GM12878 (cell line): ENCODE measurements at regions of chr11 and their contacts with region 1.

Region 1: GRCh38 chr11:129117595-129118350 is 74.4 kb downstream of the ARHGAP32 start:
- DNase-seq: no peak
- ATAC-seq: peak; percentile 71
- H3K4me3 ChIP-seq: no peak overlapping the region
- H3K27ac ChIP-seq: no peak overlapping the region
- H3K4me1 ChIP-seq: no peaks in the 10 kb centered on the region
- H3K27me3 ChIP-seq: no peaks in the 10 kb centered on the region
- CTCF ChIP-seq: peak; percentile 74 to 97 (median 81); a peak in 5 of 6 replicates
- EP300 ChIP-seq: no peak
- POLR2A ChIP-seq: no peak
- RAD21 ChIP-seq: peak; percentile 92

Region 2: DNA sequence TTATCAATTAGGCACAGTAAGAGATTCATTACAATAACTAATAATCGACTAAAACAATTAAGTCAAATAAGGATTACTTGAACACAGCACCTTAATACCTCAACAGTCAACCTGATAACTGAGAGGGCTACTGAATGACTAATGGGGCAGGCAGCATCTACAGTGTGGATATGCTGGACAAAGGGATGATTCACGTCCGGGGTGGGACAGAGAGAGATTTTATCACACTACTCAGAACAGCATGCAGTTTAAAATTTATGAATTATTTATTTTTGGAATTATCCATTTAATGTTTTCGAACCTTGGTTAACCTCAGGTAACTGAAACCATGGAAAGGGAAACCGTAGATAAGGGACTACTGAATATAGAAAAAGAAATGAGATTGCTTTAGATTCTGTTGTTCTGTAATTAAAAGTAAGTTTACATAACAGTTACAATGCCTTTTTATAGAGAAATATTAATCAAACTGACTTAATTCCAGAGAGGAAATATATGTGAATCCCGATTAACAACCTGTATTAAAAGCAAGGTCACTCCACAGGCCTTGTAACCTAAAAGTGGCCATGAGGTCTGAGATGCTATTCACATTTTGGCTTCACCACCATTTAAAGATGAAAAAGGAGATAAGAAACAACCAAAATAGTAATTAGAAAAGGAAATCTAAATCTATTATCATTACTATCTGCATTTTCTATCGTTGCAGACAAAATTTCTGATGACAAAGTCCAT is 56.1 kb before region 1 on chr11:
- CTCF ChIA-PET with region 1: no interaction called
- POLR2A ChIA-PET with region 1: no interaction called
- RAD21 ChIA-PET with region 1: no interaction called
- SMC1A ChIA-PET with region 1: no interaction called
- in situ Hi-C with region 1: no loop called
- intact Hi-C with region 1: no loop called
- DNase-seq: no peak
- ATAC-seq: no peak
- H3K4me3 ChIP-seq: no peak overlapping the region
- H3K27ac ChIP-seq: no peak overlapping the region
- H3K4me1 ChIP-seq: no peaks in the 10 kb centered on the region
- H3K27me3 ChIP-seq: no peaks in the 10 kb centered on the region
- CTCF ChIP-seq: no peak
- EP300 ChIP-seq: no peak
- POLR2A ChIP-seq: no peak
- RAD21 ChIP-seq: no peak

Region 3: GRCh38 chr11:129148496-129148895 is 30.7 kb after region 1 on chr11:
- CTCF ChIA-PET with region 1: no interaction called
- POLR2A ChIA-PET with region 1: no interaction called
- RAD21 ChIA-PET with region 1: no interaction called
- SMC1A ChIA-PET with region 1: no interaction called
- in situ Hi-C with region 1: no loop called
- intact Hi-C with region 1: no loop called
- DNase-seq: no peak
- ATAC-seq: no peak
- H3K4me3 ChIP-seq: no peak overlapping the region
- H3K27ac ChIP-seq: no peak overlapping the region
- H3K4me1 ChIP-seq: no peaks in the 10 kb centered on the region
- H3K27me3 ChIP-seq: no peaks in the 10 kb centered on the region
- CTCF ChIP-seq: no peak
- EP300 ChIP-seq: no peak
- POLR2A ChIP-seq: no peak
- RAD21 ChIP-seq: no peak

Region 4: DNA sequence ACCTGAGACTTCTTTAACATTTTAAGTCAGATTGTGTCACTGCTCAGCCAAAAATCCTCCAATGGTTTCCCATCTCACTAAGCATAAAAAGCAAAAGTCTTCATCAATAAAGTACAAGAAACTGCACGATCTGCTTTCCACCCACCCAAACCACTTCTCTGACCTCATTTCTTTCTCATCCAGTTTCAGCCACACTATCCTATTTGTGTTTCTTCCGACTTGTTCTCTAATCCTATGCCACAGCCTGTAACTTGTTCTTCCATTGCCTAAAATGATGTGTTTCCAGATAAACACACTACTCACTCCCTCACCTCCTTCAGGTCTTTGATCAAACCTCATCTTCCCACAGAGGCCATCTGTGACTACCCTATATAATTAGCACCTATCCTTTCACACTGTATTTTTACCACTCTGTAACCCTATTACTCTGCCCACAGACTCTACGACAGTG is 46.0 kb after region 1 on chr11:
- CTCF ChIA-PET with region 1: no interaction called
- POLR2A ChIA-PET with region 1: no interaction called
- RAD21 ChIA-PET with region 1: no interaction called
- SMC1A ChIA-PET with region 1: no interaction called
- in situ Hi-C with region 1: no loop called
- intact Hi-C with region 1: no loop called
- DNase-seq: no peak
- ATAC-seq: no peak
- H3K4me3 ChIP-seq: no peak overlapping the region
- H3K27ac ChIP-seq: no peak overlapping the region
- H3K4me1 ChIP-seq: no peaks in the 10 kb centered on the region
- H3K27me3 ChIP-seq: no peaks in the 10 kb centered on the region
- CTCF ChIP-seq: no peak
- EP300 ChIP-seq: no peak
- POLR2A ChIP-seq: no peak
- RAD21 ChIP-seq: no peak

Region 5: GRCh38 chr11:129223701-129224149 is 106.0 kb after region 1 on chr11:
- CTCF ChIA-PET with region 1: no interaction called
- POLR2A ChIA-PET with region 1: no interaction called
- RAD21 ChIA-PET with region 1: no interaction called
- SMC1A ChIA-PET with region 1: no interaction called
- in situ Hi-C with region 1: no loop called
- intact Hi-C with region 1: no loop called
- DNase-seq: no peak
- ATAC-seq: no peak
- H3K4me3 ChIP-seq: no peak overlapping the region
- H3K27ac ChIP-seq: no peak overlapping the region
- H3K4me1 ChIP-seq: no peaks in the 10 kb centered on the region
- H3K27me3 ChIP-seq: no peaks in the 10 kb centered on the region
- CTCF ChIP-seq: no peak
- EP300 ChIP-seq: no peak
- POLR2A ChIP-seq: no peak
- RAD21 ChIP-seq: no peak

Region 6: GRCh38 chr11:129237880-129238638 is 120.3 kb after region 1 on chr11:
- CTCF ChIA-PET with region 1: no interaction called
- POLR2A ChIA-PET with region 1: no interaction called
- RAD21 ChIA-PET with region 1: no interaction called
- SMC1A ChIA-PET with region 1: no interaction called
- in situ Hi-C with region 1: no loop called
- intact Hi-C with region 1: loop called (anchors 5 kb)
- DNase-seq: no peak
- ATAC-seq: peak; percentile 87
- H3K4me3 ChIP-seq: no peak overlapping the region
- H3K27ac ChIP-seq: no peak overlapping the region
- H3K4me1 ChIP-seq: no peaks in the 10 kb centered on the region
- H3K27me3 ChIP-seq: no peaks in the 10 kb centered on the region
- CTCF ChIP-seq: no peak
- EP300 ChIP-seq: no peak
- POLR2A ChIP-seq: no peak
- RAD21 ChIP-seq: no peak

Region 7: DNA sequence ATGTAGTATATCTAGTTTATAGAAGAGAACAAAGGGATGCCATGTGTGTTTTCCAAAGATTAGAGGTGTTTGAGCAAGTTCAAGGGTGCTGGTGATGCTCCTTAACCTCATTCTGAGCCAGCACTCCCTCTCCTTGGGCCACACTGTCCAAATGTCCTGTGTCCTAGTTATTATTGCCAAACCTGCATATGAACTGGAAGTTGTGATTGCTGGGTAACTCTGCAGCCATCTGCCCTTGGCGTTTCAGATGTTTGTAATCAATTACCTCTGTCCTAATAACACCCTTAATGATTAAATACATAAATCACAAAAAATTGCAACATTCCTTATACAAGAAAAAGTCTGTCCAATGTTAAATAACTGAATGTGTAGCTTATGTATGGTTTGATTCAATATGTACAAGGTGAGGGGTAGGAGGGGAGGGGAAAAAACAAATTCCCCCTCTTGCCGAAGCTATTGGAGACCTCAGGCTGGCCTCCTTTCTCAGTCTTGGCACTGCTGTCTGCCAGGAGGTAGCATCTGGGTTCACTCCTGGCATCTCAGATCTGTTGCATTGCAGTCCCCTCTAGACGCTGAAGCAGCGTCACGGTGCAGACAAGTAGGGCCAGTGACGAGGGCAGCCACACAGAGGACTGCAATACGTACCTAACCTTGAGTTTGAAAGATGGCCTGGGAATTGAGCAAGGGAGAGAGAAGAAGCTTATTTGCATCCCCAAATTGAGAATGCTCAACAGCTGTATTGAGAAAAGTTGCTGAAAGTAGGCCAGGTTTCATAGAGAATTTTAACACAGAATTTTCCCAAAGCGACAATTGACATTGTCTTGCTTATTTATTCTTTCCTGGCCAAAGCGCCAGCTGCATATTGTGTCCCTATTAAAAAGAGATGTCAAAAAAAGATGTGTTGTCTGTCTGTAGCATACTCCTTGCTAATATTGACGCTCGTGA is 164.0 kb after region 1 on chr11:
- CTCF ChIA-PET with region 1: no interaction called
- POLR2A ChIA-PET with region 1: no interaction called
- RAD21 ChIA-PET with region 1: no interaction called
- SMC1A ChIA-PET with region 1: no interaction called
- in situ Hi-C with region 1: no loop called
- intact Hi-C with region 1: loop called (anchors 1 kb)
- DNase-seq: no peak
- ATAC-seq: no peak
- H3K4me3 ChIP-seq: no peak overlapping the region
- H3K27ac ChIP-seq: no peak overlapping the region
- H3K4me1 ChIP-seq: no peaks in the 10 kb centered on the region
- H3K27me3 ChIP-seq: peaks cover 0 to 4% of the 10 kb centered on the region in 2 experiments; a peak in 1 of 4 replicates
- CTCF ChIP-seq: no peak
- EP300 ChIP-seq: no peak
- POLR2A ChIP-seq: no peak
- RAD21 ChIP-seq: no peak

Region 8: DNA sequence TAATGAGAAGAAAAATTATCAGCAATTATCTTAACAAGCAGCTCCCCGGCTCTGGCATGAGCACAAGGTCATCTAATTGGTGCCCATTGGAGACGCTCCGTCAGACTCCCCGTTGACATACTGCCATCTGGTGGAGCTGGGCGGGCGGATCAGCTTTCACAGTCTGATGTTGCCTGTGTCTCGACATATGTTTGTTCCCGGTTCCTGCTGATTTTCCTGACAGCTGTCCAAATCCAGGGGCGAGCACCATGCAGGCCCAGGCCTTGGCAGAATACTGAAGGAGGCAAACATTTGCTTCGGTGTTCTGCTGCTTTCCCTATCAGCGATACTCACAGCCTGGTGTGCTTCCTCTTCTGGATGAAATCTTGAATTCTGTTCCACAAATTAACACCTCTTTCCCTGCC is 214.1 kb after region 1 on chr11:
- CTCF ChIA-PET with region 1: interaction called, 47 read pairs
- POLR2A ChIA-PET with region 1: no interaction called
- RAD21 ChIA-PET with region 1: interaction called, 21 read pairs
- SMC1A ChIA-PET with region 1: interaction called, 18 read pairs
- in situ Hi-C with region 1: loop called (anchors 5 kb)
- intact Hi-C with region 1: loop called (anchors 1 kb)
- DNase-seq: peak; percentile 11
- ATAC-seq: peak; percentile 99
- H3K4me3 ChIP-seq: no peak overlapping the region
- H3K27ac ChIP-seq: no peak overlapping the region
- H3K4me1 ChIP-seq: no peaks in the 10 kb centered on the region
- H3K27me3 ChIP-seq: no peaks in the 10 kb centered on the region
- CTCF ChIP-seq: peak; percentile 77 to 88 (median 86)
- EP300 ChIP-seq: no peak
- POLR2A ChIP-seq: no peak
- RAD21 ChIP-seq: peak; percentile 72

Region 9: DNA sequence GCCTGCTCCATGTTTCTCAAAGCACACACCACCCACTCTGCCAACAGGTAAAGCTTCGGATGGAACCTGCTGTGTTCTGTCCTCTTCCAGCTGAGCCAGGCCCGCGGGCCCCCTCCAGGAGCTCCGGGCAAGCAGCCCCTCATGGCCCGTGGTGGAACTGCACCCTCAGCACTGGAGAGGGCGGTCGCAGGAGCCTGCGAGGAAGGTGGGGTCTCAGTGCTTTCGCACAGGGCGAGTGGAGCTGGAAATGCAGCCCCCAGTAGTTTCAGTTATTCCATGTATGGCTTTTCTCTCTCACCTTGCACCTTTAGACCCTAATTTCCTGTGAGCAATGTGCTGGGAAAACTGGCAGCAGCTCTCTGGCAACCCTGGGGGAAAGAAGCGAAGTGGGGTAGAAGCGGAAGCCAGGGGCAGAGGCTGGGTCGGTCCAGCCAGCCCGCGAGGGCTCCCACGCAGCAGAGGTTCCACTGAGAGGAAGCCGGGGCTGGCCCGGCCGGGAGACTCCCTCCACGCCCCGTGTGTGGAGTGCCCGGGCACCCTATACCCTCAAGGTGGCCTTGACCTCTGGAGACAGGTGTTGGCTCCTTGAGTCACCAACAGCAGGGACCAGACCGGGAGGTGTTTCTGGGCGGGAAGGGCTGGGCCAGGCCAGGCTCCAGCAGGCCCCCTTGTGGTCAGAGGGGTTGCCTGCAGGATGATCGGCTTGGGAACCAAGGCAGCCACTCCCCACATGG is 578.0 kb after region 1 on chr11:
- CTCF ChIA-PET with region 1: interaction called, 3 read pairs
- POLR2A ChIA-PET with region 1: no interaction called
- RAD21 ChIA-PET with region 1: no interaction called
- SMC1A ChIA-PET with region 1: no interaction called
- in situ Hi-C with region 1: no loop called
- intact Hi-C with region 1: loop called (anchors 10 kb)
- DNase-seq: no peak
- ATAC-seq: peak; percentile 92
- H3K4me3 ChIP-seq: no peak overlapping the region
- H3K27ac ChIP-seq: no peak overlapping the region
- H3K4me1 ChIP-seq: 0 out of 2 replicates have a peak, but pooled peaks cover 2% of the 10 kb centered on the region
- H3K27me3 ChIP-seq: no peaks in the 10 kb centered on the region
- CTCF ChIP-seq: peak; percentile 50 to 77 (median 61)
- EP300 ChIP-seq: no peak
- POLR2A ChIP-seq: no peak
- RAD21 ChIP-seq: peak; percentile 36

Region 10: DNA sequence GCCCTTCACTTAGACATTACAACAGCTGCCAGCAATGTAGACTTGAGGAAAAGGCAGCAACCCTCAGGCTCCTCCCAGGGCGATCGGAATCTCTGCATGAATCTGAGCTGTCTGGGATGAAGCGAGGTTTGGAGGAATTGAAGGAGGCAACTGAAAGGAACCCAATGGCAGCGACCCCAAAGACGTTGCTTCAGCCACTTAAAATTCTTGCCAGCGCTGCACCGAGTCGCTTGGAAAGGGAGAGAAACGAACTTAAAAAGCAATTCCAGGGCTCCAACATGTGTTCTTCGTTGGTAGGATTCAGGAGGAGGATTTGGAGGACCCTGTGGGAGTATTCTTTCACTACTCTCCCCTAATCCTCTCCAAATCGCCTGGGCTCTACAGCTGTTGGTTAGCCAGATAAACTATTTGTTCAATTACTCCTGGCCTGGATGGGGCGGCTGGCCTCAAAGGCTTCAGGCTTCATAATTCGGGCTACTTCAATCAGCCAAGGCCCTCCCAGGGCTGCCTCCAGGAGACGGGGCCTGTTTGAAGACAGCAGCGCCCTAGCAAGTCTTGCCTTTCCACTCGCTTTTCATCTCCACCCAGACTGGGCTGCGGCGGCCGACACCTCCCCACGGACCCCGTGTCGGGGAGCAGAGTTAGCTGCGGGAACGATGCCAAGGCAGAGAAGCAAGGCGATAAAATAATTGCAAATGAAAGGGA is 625.5 kb after region 1 on chr11:
- CTCF ChIA-PET with region 1: no interaction called
- POLR2A ChIA-PET with region 1: no interaction called
- RAD21 ChIA-PET with region 1: no interaction called
- SMC1A ChIA-PET with region 1: no interaction called
- in situ Hi-C with region 1: loop called (anchors 10 kb)
- intact Hi-C with region 1: no loop called
- DNase-seq: no peak
- ATAC-seq: no peak
- H3K4me3 ChIP-seq: no peak overlapping the region
- H3K27ac ChIP-seq: no peak overlapping the region
- H3K4me1 ChIP-seq: no peaks in the 10 kb centered on the region
- H3K27me3 ChIP-seq: peaks cover 0 to 4% of the 10 kb centered on the region in 2 experiments; a peak in 2 of 4 replicates
- CTCF ChIP-seq: no peak
- EP300 ChIP-seq: no peak
- POLR2A ChIP-seq: no peak
- RAD21 ChIP-seq: no peak

Region 11: GRCh38 chr11:129750349-129751292 is 632.8 kb after region 1 on chr11:
- CTCF ChIA-PET with region 1: interaction called, 6 read pairs
- POLR2A ChIA-PET with region 1: no interaction called
- RAD21 ChIA-PET with region 1: no interaction called
- SMC1A ChIA-PET with region 1: no interaction called
- in situ Hi-C with region 1: loop called (anchors 10 kb)
- intact Hi-C with region 1: loop called (anchors 1 kb)
- DNase-seq: no peak
- ATAC-seq: peak; percentile 99
- H3K4me3 ChIP-seq: no peak overlapping the region
- H3K27ac ChIP-seq: no peak overlapping the region
- H3K4me1 ChIP-seq: no peaks in the 10 kb centered on the region
- H3K27me3 ChIP-seq: no peaks in the 10 kb centered on the region; a peak in 1 of 4 replicates
- CTCF ChIP-seq: peak; percentile 96 to 99 (median 96)
- EP300 ChIP-seq: no peak
- POLR2A ChIP-seq: no peak
- RAD21 ChIP-seq: peak; percentile 75